H1 (cell line): ENCODE measurements at regions of chr3 and their contacts with region 1.

Region 1: DNA sequence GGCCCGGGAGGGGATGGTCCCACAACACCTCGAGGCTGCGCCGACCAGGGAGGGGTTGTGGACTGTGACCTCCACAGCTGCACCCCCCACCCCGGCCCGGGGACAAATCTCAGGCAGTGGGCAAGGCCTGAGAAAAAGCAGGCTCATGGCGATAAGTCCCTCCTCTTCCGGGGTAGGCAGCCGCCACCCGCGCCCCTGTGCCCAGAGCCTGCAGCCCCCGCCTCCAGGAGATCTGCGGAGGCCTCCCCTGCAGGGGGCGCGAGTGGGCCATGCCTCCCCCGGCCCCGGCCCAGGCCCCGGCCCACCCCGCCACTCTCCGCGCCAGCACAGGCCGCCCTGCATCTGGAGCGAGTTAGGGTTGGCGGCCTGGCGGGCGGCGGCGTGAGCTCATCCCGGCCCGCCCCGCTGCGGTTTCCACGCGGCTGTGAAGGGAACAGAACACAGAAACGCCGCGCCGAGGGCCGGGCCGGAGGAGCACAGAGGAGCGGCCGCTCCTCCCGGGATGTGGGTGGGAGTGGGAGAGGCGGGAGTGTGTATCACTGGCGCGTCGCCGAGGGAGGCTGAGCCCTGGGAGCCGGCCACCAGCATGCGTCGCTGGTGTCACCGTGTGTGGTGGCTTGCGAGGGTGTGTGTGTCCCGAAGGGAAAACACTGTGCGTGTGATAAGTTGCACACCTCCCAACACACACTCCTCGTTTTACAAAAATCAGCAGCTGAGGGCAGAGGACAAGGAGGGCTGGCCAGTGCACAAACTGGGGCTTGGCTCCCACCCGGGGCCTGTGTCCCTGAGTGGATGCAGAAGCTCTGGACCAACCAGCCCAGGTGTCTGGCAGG is 17.2 kb downstream of the MYL3 start:
- DNase-seq: peak; percentile 56 to 89
- H3K4me3 ChIP-seq: peak overlapping the region; percentile 28 to 63 (median 37)
- H3K27ac ChIP-seq: peak overlapping the region; percentile 20; the same call in 1 of the 2 replicates
- H3K4me1 ChIP-seq: peaks cover 0 to 10% (median 8%) of the 10 kb centered on the region in 4 experiments; a peak in 6 of 7 replicates
- H3K27me3 ChIP-seq: peaks cover 0 to 13% (median 5%) of the 10 kb centered on the region in 4 experiments; a peak in 4 of 7 replicates
- CTCF ChIP-seq: peak in 2 of 3 experiments; percentile 42 to 65; a peak in 3 of 4 replicates
- EP300 ChIP-seq: no peak
- POLR2A ChIP-seq: no peak
- RAD21 ChIP-seq: peak; percentile 36 to 59; a peak in 3 of 4 replicates

Region 2: DNA sequence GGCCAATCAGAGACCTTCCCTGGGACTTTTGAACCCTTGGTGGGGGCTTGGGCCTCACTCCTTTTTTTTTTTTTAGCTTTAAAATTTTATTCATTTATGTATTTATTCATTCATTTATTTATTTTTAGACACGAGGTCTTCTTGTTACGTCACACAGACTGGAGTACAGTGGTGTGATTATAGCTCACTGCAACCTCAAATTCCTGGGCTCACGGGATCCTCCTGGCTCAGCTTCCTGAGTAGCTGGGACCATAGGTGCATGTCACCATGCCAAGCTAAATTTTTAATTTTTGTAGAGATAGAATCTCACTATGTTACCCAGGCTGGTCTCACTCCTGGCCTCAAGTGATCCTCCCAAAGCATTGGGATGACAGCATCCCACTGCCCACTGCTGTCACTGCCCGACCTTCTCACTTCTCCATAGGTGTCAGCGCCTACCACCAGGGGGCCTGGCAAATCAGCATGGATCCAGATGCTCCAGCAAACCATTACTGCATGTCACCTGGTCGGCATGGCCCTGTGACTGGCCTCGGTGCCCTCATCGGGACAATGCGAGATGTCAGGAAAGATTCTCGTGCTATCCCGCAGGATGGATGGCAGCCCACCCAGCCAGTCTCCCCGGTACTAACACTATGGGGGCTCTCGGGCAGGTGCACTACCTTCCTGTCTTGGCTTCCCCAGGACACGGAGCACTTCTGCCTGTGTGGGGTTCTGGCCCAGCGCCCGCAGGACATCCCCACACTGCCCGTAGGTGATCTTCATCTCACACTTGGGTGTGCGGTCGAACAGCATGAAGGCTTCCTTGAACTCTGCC is 14.2 kb after region 1 on chr3:
- CTCF ChIA-PET with region 1: interaction called, 31 read pairs
- POLR2A ChIA-PET with region 1: interaction called, 5 read pairs
- DNase-seq: peak in 1 of 2 experiments; percentile 54
- H3K4me3 ChIP-seq: no peak overlapping the region
- H3K27ac ChIP-seq: no peak overlapping the region
- H3K4me1 ChIP-seq: no peaks in the 10 kb centered on the region; a peak in 2 of 7 replicates
- H3K27me3 ChIP-seq: peaks cover 0 to 6% (median 2%) of the 10 kb centered on the region in 4 experiments; a peak in 3 of 7 replicates
- CTCF ChIP-seq: peak in 2 of 3 experiments; percentile 25 to 41; a peak in 3 of 4 replicates
- EP300 ChIP-seq: no peak
- POLR2A ChIP-seq: no peak
- RAD21 ChIP-seq: peak; percentile 2 to 20; a peak in 2 of 4 replicates

Region 3: DNA sequence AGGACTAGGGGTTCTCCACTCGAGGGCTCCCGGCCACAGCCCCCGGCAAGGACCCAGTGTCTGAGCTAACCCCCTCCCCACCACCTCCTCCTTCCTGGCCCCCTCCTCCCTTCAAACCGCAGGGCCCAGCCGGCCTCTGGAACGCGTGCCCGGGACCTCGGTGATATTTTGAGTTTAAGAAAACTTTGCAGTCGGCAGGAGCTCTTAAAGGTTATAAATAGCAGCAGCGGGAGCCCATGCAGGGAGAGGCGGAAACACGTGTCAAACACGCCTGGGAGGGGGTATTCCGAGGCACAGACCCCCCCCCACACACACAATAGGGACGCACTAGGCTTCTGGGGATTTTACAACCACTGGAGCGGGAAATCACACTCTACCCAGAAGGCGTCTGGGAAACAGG is 28.4 kb after region 1 on chr3:
- CTCF ChIA-PET with region 1: interaction called, 17 read pairs
- POLR2A ChIA-PET with region 1: no interaction called
- DNase-seq: no peak
- H3K4me3 ChIP-seq: no peak overlapping the region
- H3K27ac ChIP-seq: no peak overlapping the region
- H3K4me1 ChIP-seq: peaks cover 0 to 9% (median 0%) of the 10 kb centered on the region in 4 experiments; a peak in 2 of 7 replicates
- H3K27me3 ChIP-seq: peaks cover 3 to 49% (median 36%) of the 10 kb centered on the region in 4 experiments
- CTCF ChIP-seq: no peak
- EP300 ChIP-seq: no peak
- POLR2A ChIP-seq: no peak
- RAD21 ChIP-seq: no peak

Region 4: DNA sequence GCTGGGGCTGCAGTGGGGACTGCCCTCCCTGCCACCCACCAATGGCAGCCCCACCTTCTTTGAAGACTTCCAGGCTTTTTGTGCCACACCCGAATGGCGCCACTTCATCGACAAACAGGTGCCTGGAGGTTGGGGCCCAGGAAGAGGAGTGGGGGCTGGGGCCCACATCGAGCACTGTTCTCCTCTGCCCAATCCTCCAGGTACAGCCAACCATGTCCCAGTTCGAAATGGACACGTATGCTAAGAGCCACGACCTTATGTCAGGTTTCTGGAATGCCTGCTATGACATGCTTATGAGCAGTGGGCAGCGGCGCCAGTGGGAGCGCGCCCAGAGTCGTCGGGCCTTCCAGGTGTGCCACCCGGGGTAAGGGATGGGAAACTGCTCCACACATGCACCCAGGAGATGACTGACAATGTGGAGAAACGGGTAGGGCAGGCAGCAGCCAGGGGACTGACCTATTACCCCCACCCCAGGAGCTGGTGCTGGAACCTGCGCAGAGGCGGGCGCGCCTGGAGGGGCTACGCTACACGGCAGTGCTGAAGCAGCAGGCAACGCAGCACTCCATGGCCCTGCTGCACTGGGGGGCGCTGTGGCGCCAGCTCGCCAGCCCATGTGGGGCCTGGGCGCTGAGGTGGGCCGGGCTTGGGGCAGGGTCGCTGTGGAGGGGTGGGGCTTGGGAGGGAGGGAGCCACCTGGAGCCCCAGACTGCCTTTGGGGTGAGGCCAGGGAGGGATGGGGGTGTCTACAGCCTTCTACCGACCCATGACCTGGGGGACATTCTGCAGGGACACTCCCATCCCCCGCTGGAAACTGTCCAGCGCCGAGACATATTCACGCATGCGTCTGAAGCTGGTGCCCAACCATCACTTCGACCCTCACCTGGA is 156.4 kb after region 1 on chr3:
- CTCF ChIA-PET with region 1: no interaction called
- POLR2A ChIA-PET with region 1: no interaction called
- DNase-seq: peak in 1 of 2 experiments; percentile 91
- H3K4me3 ChIP-seq: no peak overlapping the region
- H3K27ac ChIP-seq: no peak overlapping the region
- H3K4me1 ChIP-seq: peaks cover 0 to 3% (median 1%) of the 10 kb centered on the region in 4 experiments; a peak in 3 of 7 replicates
- H3K27me3 ChIP-seq: no peaks in the 10 kb centered on the region
- CTCF ChIP-seq: peak in 2 of 3 experiments; percentile 87 to 88; a peak in 3 of 4 replicates
- EP300 ChIP-seq: no peak
- POLR2A ChIP-seq: no peak
- RAD21 ChIP-seq: peak; percentile 77 to 90